CD14-positive monocyte (primary cell): ENCODE measurements at regions of chr3 and their contacts with region 1.

Region 1: DNA sequence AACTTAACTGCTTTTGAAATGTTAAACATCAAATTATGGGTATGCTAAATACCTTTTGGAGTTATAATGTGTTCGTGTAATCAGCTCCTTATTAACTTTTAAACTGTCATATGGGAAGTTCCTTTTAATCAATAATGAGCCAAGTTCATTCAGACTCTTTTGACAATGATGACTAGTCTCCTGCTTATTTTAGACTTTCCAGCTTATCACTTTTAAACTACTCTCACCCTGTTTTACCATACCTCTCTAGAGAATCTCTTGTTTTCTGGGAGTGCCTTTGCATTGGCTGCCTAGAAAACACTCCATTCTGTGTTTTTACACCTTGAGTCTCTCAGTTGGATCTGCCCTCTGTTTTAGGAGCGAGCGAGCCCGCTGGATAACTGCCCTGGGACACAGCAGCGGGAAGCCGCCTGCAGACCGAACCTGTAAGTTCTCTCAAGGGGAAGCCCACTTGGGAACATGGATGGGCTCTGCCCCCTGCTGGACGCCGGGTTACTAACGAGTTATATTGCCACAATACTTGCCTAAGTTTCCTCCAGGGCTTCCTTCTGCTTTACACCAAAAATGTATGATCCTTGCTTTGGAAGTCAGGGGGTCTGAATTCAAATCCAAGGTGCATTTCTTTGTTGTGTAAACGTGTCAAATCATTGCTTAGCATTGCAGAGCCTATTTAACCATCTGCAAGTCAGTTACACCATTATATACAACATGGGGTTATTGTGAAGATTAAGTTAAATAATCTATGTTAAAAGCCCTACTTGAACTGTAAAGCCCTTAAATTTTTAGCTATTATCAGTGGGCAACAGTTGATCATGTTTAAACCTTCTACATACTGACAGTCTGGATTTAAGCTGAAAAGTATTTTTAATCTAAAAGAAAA is 71.3 kb downstream of the DHX36 start:
- DNase-seq: peak; percentile 66 to 75 (median 72)
- H3K4me3 ChIP-seq: no peak overlapping the region
- H3K4me3 Mint-ChIP-seq: peak overlapping the region in 1 of 2 donors; percentile 62
- H3K27ac ChIP-seq: no peak overlapping the region
- H3K27ac Mint-ChIP-seq: no peak overlapping the region
- H3K4me1 ChIP-seq: no peaks in the 10 kb centered on the region
- H3K4me1 Mint-ChIP-seq: peaks cover 2% of the 10 kb centered on the region
- H3K27me3 ChIP-seq: no peaks in the 10 kb centered on the region
- H3K27me3 Mint-ChIP-seq: no peaks in the 10 kb centered on the region
- CTCF ChIP-seq: peak; percentile 94

Region 2: GRCh38 chr3:153026026-153026425 is 1227.0 kb before region 1 on chr3:
- intact Hi-C with region 1: loop called (anchors 2 to 5 kb)
- DNase-seq: peak; percentile 14 to 48 (median 25)
- H3K4me3 ChIP-seq: no peak overlapping the region
- H3K4me3 Mint-ChIP-seq: no peak overlapping the region
- H3K27ac ChIP-seq: no peak overlapping the region
- H3K27ac Mint-ChIP-seq: no peak overlapping the region
- H3K4me1 ChIP-seq: no peaks in the 10 kb centered on the region
- H3K4me1 Mint-ChIP-seq: peaks cover 7% of the 10 kb centered on the region
- H3K27me3 ChIP-seq: no peaks in the 10 kb centered on the region
- H3K27me3 Mint-ChIP-seq: peaks cover 0 to 3% (median 2%) of the 10 kb centered on the region in 3 donors
- CTCF ChIP-seq: peak; percentile 75

Region 3: DNA sequence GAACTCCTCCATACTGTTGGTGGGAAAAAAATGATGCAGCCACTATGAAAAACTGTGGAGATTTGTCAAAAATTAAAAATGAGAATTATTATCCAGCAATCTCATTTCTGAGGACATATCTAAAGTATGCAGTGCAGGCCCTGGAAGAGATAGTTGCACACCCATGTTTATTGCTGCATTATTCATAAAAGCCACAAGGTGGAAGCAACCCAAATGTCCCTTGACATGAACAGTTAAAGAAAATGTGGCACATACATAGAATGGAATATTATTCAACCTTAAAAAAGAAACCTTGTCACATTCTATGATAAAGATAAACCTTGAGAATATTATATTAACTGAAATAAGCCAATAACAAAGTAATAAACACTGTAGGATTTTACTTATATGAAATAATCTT is 212.7 kb before region 1 on chr3:
- intact Hi-C with region 1: loop called in 1 of 2 experiments (anchors 5 kb)
- DNase-seq: no peak
- H3K4me3 ChIP-seq: no peak overlapping the region
- H3K4me3 Mint-ChIP-seq: no peak overlapping the region
- H3K27ac ChIP-seq: no peak overlapping the region
- H3K27ac Mint-ChIP-seq: no peak overlapping the region
- H3K4me1 ChIP-seq: no peaks in the 10 kb centered on the region
- H3K4me1 Mint-ChIP-seq: no peaks in the 10 kb centered on the region
- H3K27me3 ChIP-seq: no peaks in the 10 kb centered on the region
- H3K27me3 Mint-ChIP-seq: peaks cover 0 to 3% (median 0%) of the 10 kb centered on the region in 3 donors
- CTCF ChIP-seq: peak; percentile 17